HCT116 (cell line): ENCODE measurements at regions of chr13 and their contacts with region 1.

Region 1: GRCh38 chr13:96967248-96967745 is 27.0 kb downstream of the OXGR1 start:
- DNase-seq: peak; percentile 59
- ATAC-seq: peak; percentile 90
- H3K4me3 ChIP-seq: peak overlapping the region; percentile 18 to 47
- H3K27ac ChIP-seq: no peak overlapping the region
- H3K4me1 ChIP-seq: peaks cover 2 to 9% of the 10 kb centered on the region in 2 experiments; a peak in 2 of 4 replicates
- H3K27me3 ChIP-seq: no peaks in the 10 kb centered on the region
- CTCF ChIP-seq: peak; percentile 47 to 55 (median 50); a peak in 5 of 6 replicates
- POLR2A ChIP-seq: no peak
- RAD21 ChIP-seq: peak; percentile 66

Region 2: GRCh38 chr13:95403828-95404522 is 1563.3 kb before region 1 on chr13:
- CTCF ChIA-PET with region 1: interaction called, 11 read pairs
- POLR2A ChIA-PET with region 1: no interaction called
- RAD21 ChIA-PET with region 1: interaction called in 1 of 2 experiments, 10 read pairs
- intact Hi-C with region 1: loop called (anchors 10 kb)
- DNase-seq: peak; percentile 61
- ATAC-seq: peak; percentile 92
- H3K4me3 ChIP-seq: no peak overlapping the region
- H3K27ac ChIP-seq: no peak overlapping the region
- H3K4me1 ChIP-seq: peaks cover 0 to 5% of the 10 kb centered on the region in 2 experiments; a peak in 1 of 4 replicates
- H3K27me3 ChIP-seq: no peaks in the 10 kb centered on the region
- CTCF ChIP-seq: peak; percentile 82 to 97 (median 90)
- POLR2A ChIP-seq: no peak
- RAD21 ChIP-seq: peak; percentile 96

Region 3: DNA sequence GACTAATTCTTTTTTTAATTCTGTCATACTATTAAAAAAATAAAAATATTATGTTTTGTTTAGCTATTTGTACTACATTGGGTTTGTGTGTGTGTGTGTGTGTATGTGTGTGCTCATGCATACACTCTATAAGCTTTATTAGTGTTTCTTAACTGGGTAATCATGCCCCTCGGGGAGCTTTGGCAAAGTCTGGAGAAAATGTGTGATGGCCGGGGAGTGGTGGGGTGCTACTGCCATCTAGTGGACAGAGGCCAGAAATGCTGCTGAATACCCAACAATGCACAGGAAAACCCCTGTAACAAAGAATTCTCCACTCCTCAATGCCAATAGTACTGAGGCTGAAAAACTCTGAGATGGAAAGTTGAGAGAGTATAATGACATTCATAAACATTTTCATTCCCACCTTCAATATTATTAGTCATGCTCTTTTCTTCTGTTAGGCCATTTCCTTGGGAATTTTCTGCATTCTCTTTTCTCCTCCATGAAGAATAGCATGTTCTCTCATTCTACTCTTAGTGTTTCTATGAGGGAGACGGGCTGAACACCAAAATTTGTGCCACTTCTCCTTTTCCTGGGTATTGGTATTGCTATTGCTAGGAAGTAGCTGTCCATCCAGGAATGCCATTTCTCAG is 1133.0 kb before region 1 on chr13:
- CTCF ChIA-PET with region 1: interaction called, 8 read pairs
- POLR2A ChIA-PET with region 1: no interaction called
- RAD21 ChIA-PET with region 1: no interaction called
- intact Hi-C with region 1: loop called (anchors 5 kb)
- DNase-seq: peak; percentile 21
- ATAC-seq: peak; percentile 80
- H3K4me3 ChIP-seq: no peak overlapping the region
- H3K27ac ChIP-seq: no peak overlapping the region
- H3K4me1 ChIP-seq: peaks cover 0 to 6% of the 10 kb centered on the region in 2 experiments; a peak in 2 of 4 replicates
- H3K27me3 ChIP-seq: no peaks in the 10 kb centered on the region
- CTCF ChIP-seq: peak; percentile 72 to 90 (median 89)
- POLR2A ChIP-seq: no peak
- RAD21 ChIP-seq: peak; percentile 89

Region 4: GRCh38 chr13:96141027-96141426 is 826.3 kb before region 1 on chr13:
- CTCF ChIA-PET with region 1: interaction called, 12 read pairs
- POLR2A ChIA-PET with region 1: no interaction called
- RAD21 ChIA-PET with region 1: no interaction called
- intact Hi-C with region 1: no loop called
- DNase-seq: no peak
- ATAC-seq: peak; percentile 42; the same call in 1 of the 2 replicates
- H3K4me3 ChIP-seq: no peak overlapping the region
- H3K27ac ChIP-seq: no peak overlapping the region
- H3K4me1 ChIP-seq: no peaks in the 10 kb centered on the region
- H3K27me3 ChIP-seq: peaks cover 5% of the 10 kb centered on the region; the same call in 1 of the 2 replicates
- CTCF ChIP-seq: peak in 2 of 3 experiments; percentile 28 to 30; a peak in 2 of 6 replicates
- POLR2A ChIP-seq: no peak
- RAD21 ChIP-seq: peak; percentile 38; the same call in 1 of the 2 replicates

Region 5: DNA sequence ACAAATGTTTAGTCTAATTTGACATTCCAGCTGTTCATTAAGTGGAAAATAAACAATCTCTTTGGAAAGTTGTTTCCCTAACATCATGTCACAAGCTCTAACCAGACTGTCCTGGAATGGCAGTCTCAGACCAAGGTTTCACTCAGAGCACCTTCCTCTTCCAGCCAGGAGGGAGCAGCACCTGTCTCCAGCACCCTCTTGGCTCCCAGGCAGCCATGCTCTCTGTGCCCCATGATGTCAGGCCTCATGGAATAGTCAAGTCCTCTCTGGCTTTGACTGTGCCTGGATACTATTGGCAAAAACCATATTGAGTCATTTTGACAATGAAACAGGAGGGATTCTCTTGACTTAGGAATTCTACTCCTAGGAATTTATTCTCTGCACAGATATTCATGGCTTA is 144.4 kb before region 1 on chr13:
- CTCF ChIA-PET with region 1: interaction called, 20 read pairs
- POLR2A ChIA-PET with region 1: no interaction called
- RAD21 ChIA-PET with region 1: interaction called in 1 of 2 experiments, 4 read pairs
- intact Hi-C with region 1: no loop called
- DNase-seq: peak; percentile 54
- ATAC-seq: peak; percentile 100
- H3K4me3 ChIP-seq: no peak overlapping the region
- H3K27ac ChIP-seq: no peak overlapping the region
- H3K4me1 ChIP-seq: no peaks in the 10 kb centered on the region
- H3K27me3 ChIP-seq: peaks cover 6% of the 10 kb centered on the region; the same call in 1 of the 2 replicates
- CTCF ChIP-seq: peak; percentile 42 to 66 (median 64); a peak in 5 of 6 replicates
- POLR2A ChIP-seq: no peak
- RAD21 ChIP-seq: peak; percentile 54